Endothelial cell of umbilical vein (primary cell): ENCODE measurements at regions of chr4 and their contacts with region 1.

Region 1: DNA sequence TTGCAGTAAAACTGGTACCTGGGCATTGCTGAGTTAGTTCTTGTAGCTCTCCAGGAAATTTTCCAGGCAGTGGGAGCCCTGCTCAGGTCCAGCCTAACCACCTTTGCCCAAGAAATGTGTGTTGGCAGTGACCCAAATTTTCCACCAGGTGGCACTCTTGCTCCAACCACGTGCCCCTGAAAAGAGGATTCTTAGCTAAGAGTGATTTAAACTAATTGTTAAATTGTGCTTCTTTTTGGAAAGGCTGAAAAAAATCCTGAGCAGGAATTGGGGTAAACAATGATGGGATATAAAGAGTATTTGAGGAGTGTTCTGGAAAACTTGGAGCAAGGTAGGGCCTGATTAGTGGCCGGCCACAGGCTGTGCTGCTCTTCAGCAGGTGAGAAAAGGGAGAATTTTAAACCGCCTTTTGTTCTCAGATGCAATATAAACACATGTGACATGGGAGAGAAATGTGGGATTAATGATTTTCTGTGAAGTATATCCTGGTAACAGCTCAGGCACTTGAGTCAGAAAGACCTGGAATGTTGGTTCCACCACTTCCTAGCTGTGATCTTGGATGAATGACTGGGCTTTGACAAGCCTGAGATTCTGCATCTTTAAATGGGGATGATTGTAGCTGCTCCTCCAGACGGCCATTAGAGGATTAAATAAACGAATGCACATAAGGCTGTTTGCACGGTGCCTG is 219.6 kb downstream of the PTTG2 start:
- DNase-seq: peak; percentile 77
- H3K4me3 ChIP-seq: no peak overlapping the region
- H3K27ac ChIP-seq: no peak overlapping the region
- H3K4me1 ChIP-seq: peaks cover 10% of the 10 kb centered on the region
- H3K27me3 ChIP-seq: no peaks in the 10 kb centered on the region
- CTCF ChIP-seq: peak; percentile 75 to 85
- POLR2A ChIP-seq: no peak

Region 2: DNA sequence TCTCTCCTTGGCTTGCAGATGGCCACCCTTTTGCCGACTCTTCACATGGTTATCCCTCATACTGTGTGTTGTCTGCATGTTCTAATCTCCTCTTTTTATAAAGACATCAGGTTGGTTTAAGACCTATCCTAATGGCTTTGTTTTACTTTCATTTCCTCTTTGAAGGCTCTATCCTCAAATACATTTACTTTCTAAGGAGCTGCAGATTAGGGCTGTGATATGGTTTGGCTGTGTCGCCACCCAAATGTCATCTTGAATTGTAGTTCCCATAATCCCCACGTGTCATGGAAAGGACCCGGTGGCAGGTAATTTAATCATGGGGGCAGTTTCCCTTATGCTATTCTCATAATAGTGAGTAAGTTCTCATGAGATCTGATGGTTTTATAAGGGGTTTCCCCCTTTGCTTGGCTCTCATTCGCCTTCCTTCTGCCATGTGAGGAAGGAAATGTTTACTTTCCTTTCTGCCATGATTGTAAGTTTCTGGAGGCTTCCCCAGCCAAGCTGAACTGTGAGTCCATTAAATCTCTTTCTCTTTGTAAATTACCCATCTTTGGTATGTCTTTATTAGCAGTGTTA is 698.2 kb before region 1 on chr4:
- CTCF ChIA-PET with region 1: no interaction called
- POLR2A ChIA-PET with region 1: no interaction called
- dilution Hi-C with region 1: no loop called
- intact Hi-C with region 1: no loop called
- DNase-seq: no peak
- H3K4me3 ChIP-seq: no peak overlapping the region
- H3K27ac ChIP-seq: no peak overlapping the region
- H3K4me1 ChIP-seq: no peaks in the 10 kb centered on the region
- H3K27me3 ChIP-seq: no peaks in the 10 kb centered on the region
- CTCF ChIP-seq: no peak
- POLR2A ChIP-seq: no peak

Region 3: DNA sequence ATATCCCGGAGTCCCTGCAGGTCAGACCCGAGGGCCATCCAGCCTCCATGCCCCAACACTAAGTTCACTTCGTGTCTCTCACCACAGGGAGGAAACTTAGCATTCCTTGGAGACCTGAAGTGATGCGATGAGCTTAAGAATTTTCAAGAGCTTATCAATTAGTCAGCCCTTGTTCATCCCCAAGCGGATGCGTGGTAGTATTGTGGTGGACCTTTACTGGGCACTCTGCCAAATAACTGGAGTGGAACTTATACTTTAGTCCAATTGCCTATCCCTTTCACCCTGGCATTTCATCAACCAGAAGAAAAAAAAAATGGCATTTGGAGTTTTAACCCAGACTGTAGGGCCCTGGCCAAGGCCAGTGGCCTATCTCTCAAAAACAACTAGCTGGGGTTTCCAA is 630.8 kb before region 1 on chr4:
- CTCF ChIA-PET with region 1: no interaction called
- POLR2A ChIA-PET with region 1: no interaction called
- dilution Hi-C with region 1: no loop called
- intact Hi-C with region 1: no loop called
- DNase-seq: peak; percentile 50
- H3K4me3 ChIP-seq: no peak overlapping the region
- H3K27ac ChIP-seq: peak overlapping the region; percentile 62
- H3K4me1 ChIP-seq: peaks cover 9% of the 10 kb centered on the region
- H3K27me3 ChIP-seq: no peaks in the 10 kb centered on the region
- CTCF ChIP-seq: no peak
- POLR2A ChIP-seq: no peak

Region 4: DNA sequence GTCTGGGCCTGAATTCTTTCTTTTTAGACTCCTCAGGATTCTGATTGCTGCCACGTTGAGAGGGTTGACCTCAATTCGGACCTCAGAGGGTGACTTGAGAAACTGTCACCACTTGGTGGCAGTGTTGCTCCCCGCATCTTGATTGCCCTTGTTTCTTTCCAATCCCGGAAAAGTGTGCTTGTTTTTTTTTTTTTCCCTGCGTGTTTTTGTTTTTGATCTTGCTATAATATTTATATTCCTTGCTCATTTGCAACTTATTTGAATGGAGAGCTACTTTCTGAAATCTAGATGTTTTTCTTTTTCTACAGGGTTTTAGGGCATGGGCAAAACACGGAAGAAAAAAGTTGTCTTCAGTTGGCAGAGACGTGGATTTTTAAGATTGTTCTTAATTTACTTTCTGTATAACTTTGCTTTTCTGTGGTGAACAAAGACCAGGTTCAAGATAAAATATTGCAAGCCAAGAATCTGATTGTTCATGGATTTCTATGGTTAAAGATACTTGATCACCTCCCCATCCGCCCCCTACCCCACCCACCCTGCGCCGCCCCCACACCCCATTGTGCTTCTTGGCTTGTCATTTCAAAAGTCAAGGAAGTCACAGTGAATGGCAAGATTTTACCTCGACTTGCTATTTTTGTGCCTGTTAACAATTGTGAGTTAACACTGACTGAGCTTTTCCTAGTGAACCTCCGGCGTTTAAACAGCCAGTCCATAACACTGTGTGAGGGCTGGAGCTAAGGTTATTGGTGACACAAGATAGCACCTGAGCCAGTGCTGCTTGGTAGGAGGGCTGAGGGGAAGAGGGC is 117.5 kb before region 1 on chr4:
- CTCF ChIA-PET with region 1: interaction called, 11 read pairs
- POLR2A ChIA-PET with region 1: no interaction called
- dilution Hi-C with region 1: no loop called
- intact Hi-C with region 1: loop called (anchors 1 kb)
- DNase-seq: peak; percentile 82
- H3K4me3 ChIP-seq: peak overlapping the region in 2 of 3 experiments; percentile 8 to 64
- H3K27ac ChIP-seq: no peak overlapping the region
- H3K4me1 ChIP-seq: peaks cover 2% of the 10 kb centered on the region
- H3K27me3 ChIP-seq: no peaks in the 10 kb centered on the region
- CTCF ChIP-seq: peak; percentile 77 to 78
- POLR2A ChIP-seq: no peak

Region 5: DNA sequence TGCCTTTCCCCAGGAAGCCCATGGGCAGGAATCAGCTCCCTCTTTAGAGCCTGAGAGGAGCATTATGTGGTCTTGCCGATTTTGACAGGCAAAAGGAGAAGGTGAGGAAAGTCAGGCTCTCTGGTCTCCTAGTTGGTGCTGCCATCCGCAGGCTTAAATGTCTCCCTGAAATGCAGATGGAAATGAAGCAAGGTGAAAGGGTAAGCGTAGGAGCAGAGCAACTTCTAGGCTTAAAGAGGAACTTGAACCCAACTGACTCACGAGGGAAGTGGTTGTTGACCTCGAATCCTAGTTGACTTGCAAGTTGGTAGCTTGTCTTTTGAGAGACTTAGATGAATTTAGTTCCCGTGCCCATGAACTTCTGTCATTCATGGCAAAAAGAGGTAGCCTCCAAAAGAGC is 13.8 kb before region 1 on chr4:
- CTCF ChIA-PET with region 1: interaction called, 38 read pairs
- POLR2A ChIA-PET with region 1: no interaction called
- dilution Hi-C with region 1: no loop called
- intact Hi-C with region 1: no loop called
- DNase-seq: no peak
- H3K4me3 ChIP-seq: no peak overlapping the region
- H3K27ac ChIP-seq: no peak overlapping the region
- H3K4me1 ChIP-seq: peaks cover 24% of the 10 kb centered on the region
- H3K27me3 ChIP-seq: peaks cover 5 to 7% of the 10 kb centered on the region in 2 experiments
- CTCF ChIP-seq: no peak
- POLR2A ChIP-seq: no peak

Region 6: GRCh38 chr4:38319456-38320342 is 139.9 kb after region 1 on chr4:
- CTCF ChIA-PET with region 1: interaction called, 63 read pairs
- POLR2A ChIA-PET with region 1: interaction called, 3 read pairs
- dilution Hi-C with region 1: no loop called
- intact Hi-C with region 1: loop called (anchors 1 kb)
- DNase-seq: peak; percentile 89
- H3K4me3 ChIP-seq: peak overlapping the region in 1 of 3 experiments; percentile 41
- H3K27ac ChIP-seq: peak overlapping the region; percentile 67
- H3K4me1 ChIP-seq: peaks cover 16% of the 10 kb centered on the region
- H3K27me3 ChIP-seq: no peaks in the 10 kb centered on the region
- CTCF ChIP-seq: peak; percentile 97 to 98
- POLR2A ChIP-seq: no peak

Region 7: DNA sequence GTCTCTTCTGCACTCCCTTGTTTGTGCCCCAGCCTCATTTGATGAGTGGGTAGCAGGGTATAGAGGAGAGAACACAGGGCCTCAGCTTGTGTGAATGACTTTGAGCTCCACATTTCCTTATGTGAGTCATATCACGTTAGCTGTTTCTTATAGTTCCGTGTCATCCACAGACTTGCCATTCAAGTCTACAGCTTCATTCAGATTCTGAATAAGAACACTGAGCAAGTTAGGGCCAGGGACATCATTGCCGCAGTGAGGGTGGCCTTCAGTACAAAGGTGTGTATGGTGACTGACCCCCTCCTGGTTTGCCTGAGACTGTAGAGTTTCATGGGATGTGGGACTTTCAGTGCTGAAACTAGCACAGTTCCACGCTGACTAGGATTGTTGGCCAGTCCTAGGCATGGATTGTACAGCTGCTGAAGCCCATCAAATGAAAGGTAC is 507.8 kb after region 1 on chr4:
- CTCF ChIA-PET with region 1: interaction called, 19 read pairs
- POLR2A ChIA-PET with region 1: no interaction called
- dilution Hi-C with region 1: no loop called
- intact Hi-C with region 1: no loop called
- DNase-seq: peak; percentile 56
- H3K4me3 ChIP-seq: no peak overlapping the region
- H3K27ac ChIP-seq: peak overlapping the region; percentile 16
- H3K4me1 ChIP-seq: peaks cover 32% of the 10 kb centered on the region
- H3K27me3 ChIP-seq: no peaks in the 10 kb centered on the region
- CTCF ChIP-seq: no peak
- POLR2A ChIP-seq: no peak

Region 8: DNA sequence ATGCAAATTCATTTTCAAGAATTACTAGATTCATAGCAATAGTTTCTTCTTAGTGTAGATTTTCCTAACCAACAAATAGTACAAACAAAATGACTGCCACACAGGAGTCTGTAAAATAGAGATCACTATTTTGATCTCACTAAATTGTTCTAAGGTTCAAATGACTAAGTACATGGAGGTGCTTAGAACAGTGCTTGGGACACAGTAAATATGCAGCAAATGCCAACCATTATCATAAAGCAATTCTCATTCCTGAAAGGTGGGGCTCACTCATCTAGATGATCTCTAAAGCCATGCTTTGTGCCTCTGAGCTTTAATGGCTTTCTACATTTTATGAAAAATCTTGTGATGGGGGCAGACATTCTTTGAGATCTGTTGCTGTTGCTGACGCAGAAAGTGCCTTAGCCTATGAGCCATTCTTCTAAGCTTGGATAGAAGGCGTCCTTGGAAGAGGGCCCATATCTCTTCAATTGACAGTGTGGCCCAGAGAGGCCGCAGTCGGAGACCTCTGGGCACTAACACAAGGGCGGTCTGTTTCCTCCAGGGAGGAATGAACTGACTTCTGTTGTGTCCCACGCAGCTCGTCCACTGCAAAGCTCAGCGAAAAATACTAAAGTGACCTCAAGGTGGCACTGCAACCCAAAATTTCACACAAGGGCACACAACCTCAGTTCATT is 579.4 kb after region 1 on chr4:
- CTCF ChIA-PET with region 1: interaction called, 25 read pairs
- POLR2A ChIA-PET with region 1: no interaction called
- dilution Hi-C with region 1: no loop called
- intact Hi-C with region 1: loop called (anchors 1 kb)
- DNase-seq: peak; percentile 64
- H3K4me3 ChIP-seq: no peak overlapping the region
- H3K27ac ChIP-seq: no peak overlapping the region
- H3K4me1 ChIP-seq: no peaks in the 10 kb centered on the region
- H3K27me3 ChIP-seq: peaks cover 0 to 3% of the 10 kb centered on the region in 2 experiments
- CTCF ChIP-seq: peak; percentile 47 to 64
- POLR2A ChIP-seq: no peak